ENCODE measurements at regions of chr13 and their contacts with region 1.

Region 1: GRCh38 chr13:25574437-25575411 is 202.9 kb downstream of the ATP8A2 start:
- DNase-seq: peak; percentile 48 to 93 (median 84)
- H3K4me3 ChIP-seq: no peak overlapping the region
- H3K27ac ChIP-seq: no peak overlapping the region
- H3K27me3 ChIP-seq: no peaks in the 10 kb centered on the region
- CTCF ChIP-seq: peak; percentile 31 to 98 (median 92)

Region 2: DNA sequence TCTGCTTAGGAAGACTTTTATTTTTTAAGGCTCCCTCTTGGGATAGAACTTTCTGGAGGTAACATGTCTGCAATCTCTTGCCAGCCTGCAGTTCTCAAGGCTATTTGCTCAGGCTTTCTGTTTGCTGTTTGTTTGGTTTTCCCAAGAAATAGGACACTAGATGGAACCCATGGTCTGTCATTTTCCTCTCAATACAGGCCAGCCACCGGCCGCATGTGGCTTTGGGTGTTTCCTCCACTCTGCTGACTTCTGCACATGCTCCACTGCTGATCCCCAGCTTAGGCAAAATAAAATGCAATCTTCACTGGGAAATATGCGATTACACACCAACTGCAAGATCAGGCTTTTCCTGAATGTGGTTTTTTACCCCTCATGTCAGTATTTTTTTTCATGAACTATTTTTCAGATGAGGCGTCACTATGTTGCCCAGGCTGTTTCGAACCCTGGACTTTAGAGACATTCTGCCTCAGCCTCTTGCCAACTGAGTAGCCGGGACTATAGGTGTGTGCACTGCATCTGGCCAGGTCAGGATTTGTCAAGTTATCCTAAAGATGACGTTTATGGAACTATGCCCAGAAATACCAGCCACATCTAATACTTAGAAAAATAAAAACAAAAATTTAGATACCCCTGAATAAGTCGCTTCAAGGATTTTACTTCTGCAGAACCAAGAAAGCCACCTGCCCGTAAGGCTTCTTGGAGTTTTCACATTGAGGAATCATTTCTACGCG is 573.1 kb before region 1 on chr13:
- intact Hi-C with region 1: loop called in 1 of 2 experiments (anchors 10 kb)
- DNase-seq: no peak
- H3K4me3 ChIP-seq: no peak overlapping the region
- H3K27ac ChIP-seq: no peak overlapping the region
- H3K27me3 ChIP-seq: peaks cover 0 to 7% (median 0%) of the 10 kb centered on the region in 45 donors
- CTCF ChIP-seq: no peak

Region 3: DNA sequence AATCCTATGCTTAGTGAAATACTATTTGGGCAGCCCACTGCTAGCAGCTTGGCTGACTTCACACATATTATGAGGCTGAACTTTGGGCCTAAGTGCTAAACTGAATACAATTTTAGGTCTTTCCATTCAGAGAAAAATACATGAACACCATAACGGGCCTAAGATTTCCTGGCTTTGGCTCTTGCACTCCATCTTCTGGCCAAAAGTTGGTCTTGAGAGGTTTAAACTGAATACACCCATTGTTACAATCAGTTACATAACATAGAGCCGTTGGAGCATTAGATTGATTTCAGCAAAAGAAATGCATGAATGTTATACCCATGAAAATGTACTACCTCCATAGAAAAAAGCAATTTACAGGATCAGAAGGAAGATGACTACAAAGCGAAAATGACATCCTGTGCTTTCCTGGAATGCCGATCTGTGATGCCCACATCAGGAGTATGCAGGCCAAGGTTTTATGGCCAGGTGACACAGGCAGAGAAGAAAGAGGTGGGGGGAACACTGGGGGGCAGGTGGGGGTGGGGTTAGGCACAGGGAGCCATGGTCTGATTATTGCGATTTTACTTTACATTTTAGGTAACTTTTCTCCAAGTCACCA is 488.2 kb after region 1 on chr13:
- intact Hi-C with region 1: loop called (anchors 5 kb)
- DNase-seq: peak in 4 of 10 donors; percentile 35 to 69 (median 58)
- H3K4me3 ChIP-seq: no peak overlapping the region
- H3K27ac ChIP-seq: peak overlapping the region in 28 of 59 donors; percentile 2 to 76 (median 38)
- H3K27me3 ChIP-seq: peaks cover 0 to 7% (median 0%) of the 10 kb centered on the region in 45 donors
- CTCF ChIP-seq: peak; percentile 57 to 86 (median 77)

Region 4: DNA sequence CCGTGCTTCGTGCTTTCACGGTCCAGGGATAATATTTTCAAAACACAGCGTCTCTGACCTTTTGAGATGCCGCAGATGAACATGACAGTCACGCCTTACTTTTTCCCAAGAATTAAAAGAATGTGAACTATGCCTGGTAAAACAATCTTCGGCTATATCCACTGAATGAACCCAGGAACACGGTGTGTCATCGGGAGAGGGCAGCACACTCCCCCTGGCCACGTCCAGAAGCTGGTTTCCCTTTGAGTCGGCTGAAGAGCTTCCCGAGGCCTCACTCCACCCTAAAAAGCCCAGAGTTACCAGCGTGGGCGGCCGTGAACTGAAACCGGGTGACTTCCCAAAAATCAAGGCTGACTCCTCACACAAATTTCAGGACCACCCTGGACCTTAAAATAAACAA is 500.0 kb after region 1 on chr13:
- intact Hi-C with region 1: loop called (anchors 5 kb)
- DNase-seq: no peak
- H3K4me3 ChIP-seq: no peak overlapping the region
- H3K27ac ChIP-seq: no peak overlapping the region
- H3K27me3 ChIP-seq: peaks cover 0 to 5% (median 0%) of the 10 kb centered on the region in 45 donors
- CTCF ChIP-seq: no peak

Region 5: DNA sequence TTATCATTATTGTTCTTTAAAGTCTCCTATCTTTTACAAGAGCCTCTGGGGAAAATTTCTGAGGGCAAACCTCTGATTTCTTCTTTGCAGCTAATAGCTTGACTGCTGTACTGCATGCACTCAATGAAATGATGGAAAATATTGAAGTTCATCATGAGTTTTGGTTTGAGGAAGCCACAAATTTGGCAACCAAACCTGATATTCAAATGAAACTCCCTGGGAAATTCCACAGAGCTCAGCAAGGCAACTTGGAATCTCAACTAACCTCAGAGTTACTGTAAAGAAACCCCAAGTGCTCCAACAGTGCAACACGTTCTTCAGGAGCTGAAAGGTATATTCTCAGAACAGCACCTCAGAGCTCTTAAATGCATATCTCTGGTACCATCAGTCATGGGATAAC is 661.6 kb after region 1 on chr13:
- intact Hi-C with region 1: no loop called
- DNase-seq: no peak
- H3K4me3 ChIP-seq: no peak overlapping the region
- H3K27ac ChIP-seq: no peak overlapping the region
- H3K27me3 ChIP-seq: no peaks in the 10 kb centered on the region
- CTCF ChIP-seq: no peak

Region 6: DNA sequence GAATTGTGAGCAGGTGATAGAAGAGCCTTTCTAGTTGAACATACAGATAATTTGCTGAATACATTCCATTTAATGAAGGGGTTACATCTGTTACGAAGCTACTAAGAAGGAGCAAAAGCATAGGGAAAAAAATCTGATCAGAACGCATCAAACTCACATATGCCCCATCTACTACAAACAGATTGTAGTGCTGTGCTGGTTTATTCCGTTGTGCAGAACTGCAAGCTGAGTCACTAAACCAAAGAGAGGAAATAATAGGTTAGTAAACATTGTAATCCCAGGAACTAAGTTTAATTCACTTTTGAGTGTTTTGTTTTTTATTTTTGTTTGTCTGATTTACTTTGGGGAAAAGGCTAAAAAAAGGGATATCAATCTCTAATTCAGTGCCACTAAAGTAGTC is 815.5 kb after region 1 on chr13:
- intact Hi-C with region 1: no loop called
- DNase-seq: no peak
- H3K4me3 ChIP-seq: no peak overlapping the region
- H3K27ac ChIP-seq: no peak overlapping the region
- H3K27me3 ChIP-seq: no peaks in the 10 kb centered on the region
- CTCF ChIP-seq: no peak

Region 7: GRCh38 chr13:26698392-26699196 is 1123.9 kb after region 1 on chr13:
- intact Hi-C with region 1: loop called in 1 of 2 experiments (anchors 10 kb)
- DNase-seq: peak; percentile 73 to 92 (median 86)
- H3K4me3 ChIP-seq: peak overlapping the region in 50 of 59 donors; percentile 10 to 59 (median 41)
- H3K27ac ChIP-seq: peak overlapping the region in 8 of 59 donors; percentile 8 to 76 (median 40)
- H3K27me3 ChIP-seq: no peaks in the 10 kb centered on the region
- CTCF ChIP-seq: peak; percentile 96 to 100 (median 99)

Measured in dorsolateral prefrontal cortex (tissue), 120 donors.